Sigmoid colon (tissue), 7 donors: ENCODE measurements at regions of chr7 and their contacts with region 1.

Region 1: GRCh38 chr7:123865517-123866117 is 20.6 kb downstream of the HYAL4 start:
- DNase-seq: no peak
- H3K4me3 ChIP-seq: no peak overlapping the region
- H3K27ac ChIP-seq: no peak overlapping the region
- H3K4me1 ChIP-seq: no peaks in the 10 kb centered on the region
- H3K27me3 ChIP-seq: peaks cover 0 to 2% (median 0%) of the 10 kb centered on the region in 3 donors
- CTCF ChIP-seq: peak; percentile 44 to 72 (median 70)
- EP300 ChIP-seq: no peak
- POLR2A ChIP-seq: no peak

Region 2: DNA sequence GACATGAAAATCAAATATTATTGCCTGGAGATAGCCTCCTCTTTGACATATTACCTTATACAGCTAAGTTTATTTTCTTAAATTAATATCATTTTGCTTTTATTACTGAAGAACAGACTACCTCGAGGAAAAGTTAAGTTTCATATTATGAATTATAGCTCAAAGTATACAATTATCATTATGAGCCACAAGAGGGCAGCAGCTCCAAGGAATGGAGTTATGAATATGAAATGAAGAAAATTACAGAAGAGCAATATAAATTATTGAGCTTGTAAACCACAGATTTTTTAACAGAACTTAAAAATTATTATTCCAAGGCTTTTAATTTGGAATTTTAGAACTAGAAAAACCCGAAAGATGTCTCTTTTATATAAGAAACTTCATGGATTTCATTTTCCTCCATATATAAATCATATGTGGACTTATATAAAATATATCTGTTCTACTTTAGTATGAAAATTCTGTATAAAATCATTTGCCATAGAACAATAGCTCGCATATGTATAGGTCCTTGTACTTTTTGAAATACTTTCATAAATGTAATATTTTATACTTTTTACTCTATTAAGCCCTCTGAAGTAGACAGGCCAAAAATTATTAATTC is 371.3 kb before region 1 on chr7:
- intact Hi-C with region 1: loop called (anchors 5 kb)
- DNase-seq: no peak
- H3K4me3 ChIP-seq: no peak overlapping the region
- H3K27ac ChIP-seq: no peak overlapping the region
- H3K4me1 ChIP-seq: no peaks in the 10 kb centered on the region
- H3K27me3 ChIP-seq: no peaks in the 10 kb centered on the region
- CTCF ChIP-seq: peak in 3 of 4 experiments; percentile 26 to 64 (median 46)
- EP300 ChIP-seq: no peak
- POLR2A ChIP-seq: no peak

Region 3: GRCh38 chr7:123580406-123581161 is 285.0 kb before region 1 on chr7:
- intact Hi-C with region 1: loop called (anchors 5 kb)
- DNase-seq: no peak
- H3K4me3 ChIP-seq: no peak overlapping the region
- H3K27ac ChIP-seq: no peak overlapping the region
- H3K4me1 ChIP-seq: no peaks in the 10 kb centered on the region
- H3K27me3 ChIP-seq: no peaks in the 10 kb centered on the region
- CTCF ChIP-seq: peak in 2 of 4 experiments; percentile 38 to 41
- EP300 ChIP-seq: no peak
- POLR2A ChIP-seq: no peak

Region 4: DNA sequence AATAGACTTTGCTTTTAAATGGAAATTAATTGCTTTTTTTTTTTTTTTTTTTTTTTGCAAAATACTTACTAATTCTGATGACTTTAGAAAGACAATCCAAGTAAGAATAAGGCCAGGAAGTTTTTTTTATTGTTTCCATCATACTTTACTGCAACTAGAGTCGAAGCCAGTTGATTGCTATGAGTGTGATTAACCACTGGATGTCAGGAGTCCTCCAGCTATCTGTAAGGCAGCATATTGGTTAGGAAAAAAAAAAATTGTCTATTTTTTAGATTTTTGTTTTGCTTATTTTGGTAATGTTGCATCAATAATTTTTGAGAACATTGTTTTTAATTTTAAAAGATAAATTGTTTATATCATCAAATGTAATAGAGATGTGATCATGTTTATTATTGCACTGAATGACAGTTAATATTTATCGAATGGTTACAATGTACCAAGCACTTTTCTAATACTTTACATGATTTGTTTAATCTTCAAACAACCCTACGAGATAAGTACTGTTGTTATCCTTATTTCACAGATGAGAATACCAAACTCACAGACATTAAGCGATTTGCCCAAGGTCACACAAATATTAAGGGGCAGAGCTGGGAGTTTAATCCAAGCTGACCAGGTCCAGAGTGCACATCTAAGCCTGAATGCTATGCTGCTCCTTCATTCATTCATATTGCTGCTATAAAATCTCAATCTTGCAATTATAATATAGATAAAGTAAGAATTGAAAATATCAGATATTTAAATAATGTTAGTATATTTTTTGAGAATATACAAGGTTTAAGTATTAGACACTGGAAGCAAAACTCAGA is 229.9 kb before region 1 on chr7:
- intact Hi-C with region 1: loop called (anchors 5 kb)
- DNase-seq: no peak
- H3K4me3 ChIP-seq: no peak overlapping the region
- H3K27ac ChIP-seq: no peak overlapping the region
- H3K4me1 ChIP-seq: no peaks in the 10 kb centered on the region
- H3K27me3 ChIP-seq: no peaks in the 10 kb centered on the region
- CTCF ChIP-seq: no peak
- EP300 ChIP-seq: no peak
- POLR2A ChIP-seq: no peak

Region 5: GRCh38 chr7:123682690-123683089 is 182.9 kb before region 1 on chr7:
- intact Hi-C with region 1: loop called (anchors 1 kb)
- DNase-seq: no peak
- H3K4me3 ChIP-seq: no peak overlapping the region
- H3K27ac ChIP-seq: no peak overlapping the region
- H3K4me1 ChIP-seq: no peaks in the 10 kb centered on the region
- H3K27me3 ChIP-seq: no peaks in the 10 kb centered on the region
- CTCF ChIP-seq: peak in 3 of 4 experiments; percentile 10 to 36 (median 19)
- EP300 ChIP-seq: no peak
- POLR2A ChIP-seq: no peak

Region 6: DNA sequence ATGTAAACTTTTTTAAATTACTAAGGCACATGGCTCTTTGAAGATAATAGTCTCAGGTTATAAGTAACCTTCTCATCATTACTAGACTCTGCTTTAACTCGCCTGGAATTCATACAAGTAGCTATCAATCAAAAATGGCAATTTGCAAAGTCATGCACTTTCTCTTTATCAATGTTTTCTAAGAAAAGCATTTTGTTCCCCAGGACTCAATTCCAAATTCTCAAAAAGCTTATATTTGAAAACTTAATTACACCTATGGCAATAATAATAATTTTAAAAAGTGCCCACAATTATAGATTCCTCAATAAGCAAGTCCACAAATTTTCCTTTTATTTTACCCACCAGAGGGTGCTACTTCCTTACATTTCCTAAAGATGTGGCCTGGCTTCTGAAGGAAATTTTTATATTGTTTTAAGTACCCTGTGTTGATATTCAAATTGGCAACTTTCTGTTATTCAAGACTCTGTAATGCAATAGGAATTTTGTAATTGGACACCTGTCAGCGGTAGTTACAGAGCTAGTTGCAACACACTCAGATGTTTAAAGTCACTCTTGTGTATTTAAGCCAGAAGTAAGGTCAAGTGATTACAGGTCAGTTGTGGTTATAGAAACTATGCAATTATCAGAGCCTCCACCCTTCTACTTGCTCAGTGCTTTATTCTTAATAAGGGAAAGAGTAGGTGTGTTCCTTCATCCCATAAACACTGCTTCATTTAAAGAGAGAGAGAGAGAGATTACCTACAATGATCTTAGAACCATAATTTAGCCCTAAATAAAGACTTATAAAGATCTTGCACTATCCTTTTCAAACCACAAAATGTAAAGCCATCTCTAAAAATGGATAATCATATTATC is 67.7 kb before region 1 on chr7:
- intact Hi-C with region 1: loop called (anchors 2 kb)
- DNase-seq: no peak
- H3K4me3 ChIP-seq: no peak overlapping the region
- H3K27ac ChIP-seq: no peak overlapping the region
- H3K4me1 ChIP-seq: no peaks in the 10 kb centered on the region
- H3K27me3 ChIP-seq: no peaks in the 10 kb centered on the region
- CTCF ChIP-seq: peak in 3 of 4 experiments; percentile 13 to 50 (median 24)
- EP300 ChIP-seq: no peak
- POLR2A ChIP-seq: no peak